Esophagus muscularis mucosa (tissue), 4 donors: ENCODE measurements at regions of chr7 and their contacts with region 1.

Region 1: DNA sequence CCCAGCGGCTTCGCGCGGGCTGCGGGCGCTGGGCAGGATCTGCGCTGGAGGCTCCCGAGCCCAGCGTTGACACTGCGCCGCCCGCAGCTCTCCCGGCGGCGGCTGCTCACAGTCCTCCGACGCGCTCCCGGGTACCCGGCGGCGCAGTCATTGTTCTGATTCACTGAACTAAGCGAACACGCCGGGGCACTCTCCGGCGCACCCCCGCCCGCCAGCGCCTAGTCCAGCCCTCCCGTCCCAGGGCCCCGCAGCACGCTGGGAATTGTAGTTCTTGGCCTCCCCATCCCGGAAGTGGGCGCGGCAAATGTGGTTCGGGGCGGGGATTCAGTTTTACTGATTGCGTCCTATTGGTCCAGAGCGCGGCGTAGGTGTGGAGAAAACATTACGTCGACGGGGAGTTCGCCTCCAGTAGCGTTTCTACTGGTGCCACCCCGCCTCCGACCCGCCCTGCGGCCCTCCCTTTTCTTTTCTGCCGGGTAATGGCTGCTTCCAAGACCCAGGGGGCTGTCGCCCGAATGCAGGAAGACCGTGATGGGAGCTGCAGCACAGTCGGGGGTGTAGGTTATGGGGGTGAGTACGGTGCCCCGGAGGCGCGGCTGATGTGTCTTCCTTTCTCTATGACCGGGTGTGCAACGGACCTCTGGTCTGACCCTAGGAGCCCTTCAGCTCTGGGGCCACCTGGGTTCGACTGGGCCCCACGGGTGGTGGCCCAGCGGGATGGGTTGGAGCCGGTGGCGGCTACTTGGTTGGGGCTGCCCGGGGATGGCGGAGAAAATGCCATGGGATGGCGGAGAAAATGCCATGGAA is at the starts of genes DOCK4 and ZNF277:
- DNase-seq: peak; percentile 100
- H3K4me3 ChIP-seq: peak within 1 kb of the TSS; percentile 81 to 90 (median 86)
- H3K27ac ChIP-seq: peak within 1 kb of the TSS; percentile 84 to 93 (median 88)
- H3K4me1 ChIP-seq: peaks cover 15 to 41% (median 35%) of the 10 kb centered on the region in 4 donors
- H3K27me3 ChIP-seq: no peaks in the 10 kb centered on the region
- CTCF ChIP-seq: peak in 1 of 3 experiments; percentile 7
- EP300 ChIP-seq: no peak
- POLR2A ChIP-seq: peak; percentile 21
- total RNA-seq, gene DOCK4: 14.0 to 25.3 (median 18.8) TPM
- total RNA-seq, gene ZNF277: 19.5 to 27.1 (median 25.7) TPM

Region 2: GRCh38 chr7:111752022-111752582 is 454.3 kb before region 1 on chr7:
- intact Hi-C with region 1: loop called (anchors 10 kb)
- DNase-seq: no peak
- H3K4me3 ChIP-seq: no peak overlapping the region
- H3K27ac ChIP-seq: no peak overlapping the region
- H3K4me1 ChIP-seq: no peaks in the 10 kb centered on the region
- H3K27me3 ChIP-seq: no peaks in the 10 kb centered on the region
- CTCF ChIP-seq: peak; percentile 45 to 72 (median 53)
- EP300 ChIP-seq: no peak
- POLR2A ChIP-seq: no peak

Region 3: DNA sequence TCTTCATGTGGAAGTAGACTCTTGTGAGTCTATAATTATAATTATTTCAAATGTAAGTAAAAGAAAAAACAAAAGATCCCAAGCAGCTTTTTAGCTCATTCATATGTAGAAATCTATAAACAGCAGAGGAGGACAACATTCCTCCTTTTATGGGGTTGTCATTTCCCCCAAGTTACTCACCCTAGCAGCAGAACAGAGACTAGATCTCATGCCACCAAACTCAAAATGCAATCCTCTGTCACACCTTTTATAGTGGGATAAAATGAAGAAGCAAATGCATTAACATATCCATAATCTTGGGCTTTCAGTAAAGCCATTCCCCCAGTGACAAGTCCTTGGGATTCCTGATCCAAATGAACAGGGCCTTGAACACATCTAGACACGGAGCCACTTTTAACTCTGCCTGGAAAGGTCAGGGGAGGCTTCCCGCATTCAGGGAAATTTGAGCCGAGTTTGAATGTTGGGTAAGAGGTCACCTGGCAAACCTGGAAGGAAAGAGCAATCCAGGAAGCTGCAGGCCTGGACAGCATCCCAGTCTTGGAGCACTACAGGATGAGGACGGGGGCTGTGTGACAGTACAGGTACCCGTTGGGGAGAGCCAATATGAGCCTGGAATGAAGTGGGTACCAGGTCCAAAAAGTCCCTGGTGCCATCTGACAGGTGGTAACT is 76.7 kb before region 1 on chr7:
- intact Hi-C with region 1: loop called (anchors 10 kb)
- DNase-seq: no peak
- H3K4me3 ChIP-seq: no peak overlapping the region
- H3K27ac ChIP-seq: peak overlapping the region in 2 of 4 donors; percentile 13 to 24
- H3K4me1 ChIP-seq: peaks cover 25 to 40% (median 31%) of the 10 kb centered on the region in 4 donors
- H3K27me3 ChIP-seq: no peaks in the 10 kb centered on the region
- CTCF ChIP-seq: no peak
- EP300 ChIP-seq: no peak
- POLR2A ChIP-seq: no peak

Region 4: GRCh38 chr7:112398534-112398933 is 192.1 kb after region 1 on chr7:
- intact Hi-C with region 1: loop called (anchors 10 kb)
- DNase-seq: no peak
- H3K4me3 ChIP-seq: no peak overlapping the region
- H3K27ac ChIP-seq: no peak overlapping the region
- H3K4me1 ChIP-seq: no peaks in the 10 kb centered on the region
- H3K27me3 ChIP-seq: peaks cover 0 to 7% (median 0%) of the 10 kb centered on the region in 4 donors
- CTCF ChIP-seq: no peak
- EP300 ChIP-seq: no peak
- POLR2A ChIP-seq: no peak

Region 5: DNA sequence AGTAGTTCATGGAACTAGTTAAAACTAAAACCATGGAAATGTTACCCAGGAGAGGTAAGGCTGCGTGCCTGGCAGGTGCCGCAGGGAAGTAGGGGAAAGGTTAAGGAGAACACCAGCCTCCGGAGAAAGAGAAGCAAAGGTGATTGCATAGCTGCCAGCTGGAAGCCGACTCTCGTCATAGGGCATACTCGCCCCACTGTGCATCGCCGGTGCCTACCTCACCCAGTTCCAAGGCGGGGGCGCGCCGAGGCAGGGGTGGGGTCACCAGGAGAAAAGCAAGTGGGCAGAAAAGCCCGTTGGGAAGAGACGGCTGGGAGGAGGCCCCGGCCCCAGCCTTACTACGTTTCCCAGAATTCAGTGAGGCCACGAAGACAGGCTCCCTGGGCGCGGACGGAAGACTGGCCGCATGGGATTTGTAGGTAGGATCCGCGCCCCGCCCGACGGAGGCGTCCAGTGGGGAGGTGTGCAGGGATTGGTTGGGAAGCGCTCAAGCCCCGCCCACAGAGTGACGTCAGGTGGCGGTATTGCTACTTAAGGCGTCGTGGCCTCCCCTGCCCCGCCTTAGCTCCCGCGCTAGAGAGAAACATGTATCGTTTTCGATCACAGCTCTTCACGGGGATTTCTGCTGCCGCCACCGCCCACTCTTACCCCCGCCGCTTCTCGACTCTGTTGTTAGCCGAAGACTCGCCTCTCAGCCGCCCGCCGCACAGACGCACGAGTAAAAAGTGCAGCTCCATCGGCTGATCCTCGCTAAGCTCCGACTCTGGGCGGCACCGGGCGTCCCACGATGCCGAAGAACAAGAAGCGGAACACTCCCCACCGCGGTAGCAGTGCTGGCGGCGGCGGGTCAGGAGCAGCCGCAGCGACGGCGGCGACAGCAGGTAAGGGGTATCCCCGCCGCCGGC is 243.7 kb after region 1 on chr7 and contains the start of gene IFRD1:
- intact Hi-C with region 1: loop called (anchors 10 kb)
- DNase-seq: peak; percentile 100
- H3K4me3 ChIP-seq: peak within 1 kb of the TSS; percentile 84 to 100 (median 95)
- H3K27ac ChIP-seq: peak within 1 kb of the TSS; percentile 99 to 100 (median 100)
- H3K4me1 ChIP-seq: peaks cover 30 to 46% (median 43%) of the 10 kb centered on the region in 4 donors
- H3K27me3 ChIP-seq: no peaks in the 10 kb centered on the region
- CTCF ChIP-seq: peak in 1 of 3 experiments; percentile 3
- EP300 ChIP-seq: no peak
- POLR2A ChIP-seq: peak; percentile 99
- total RNA-seq, gene IFRD1: 36.9 to 51.5 (median 48.0) TPM